B cell (primary cell): ENCODE measurements at regions of chr5 and their contacts with region 1.

Region 1: DNA sequence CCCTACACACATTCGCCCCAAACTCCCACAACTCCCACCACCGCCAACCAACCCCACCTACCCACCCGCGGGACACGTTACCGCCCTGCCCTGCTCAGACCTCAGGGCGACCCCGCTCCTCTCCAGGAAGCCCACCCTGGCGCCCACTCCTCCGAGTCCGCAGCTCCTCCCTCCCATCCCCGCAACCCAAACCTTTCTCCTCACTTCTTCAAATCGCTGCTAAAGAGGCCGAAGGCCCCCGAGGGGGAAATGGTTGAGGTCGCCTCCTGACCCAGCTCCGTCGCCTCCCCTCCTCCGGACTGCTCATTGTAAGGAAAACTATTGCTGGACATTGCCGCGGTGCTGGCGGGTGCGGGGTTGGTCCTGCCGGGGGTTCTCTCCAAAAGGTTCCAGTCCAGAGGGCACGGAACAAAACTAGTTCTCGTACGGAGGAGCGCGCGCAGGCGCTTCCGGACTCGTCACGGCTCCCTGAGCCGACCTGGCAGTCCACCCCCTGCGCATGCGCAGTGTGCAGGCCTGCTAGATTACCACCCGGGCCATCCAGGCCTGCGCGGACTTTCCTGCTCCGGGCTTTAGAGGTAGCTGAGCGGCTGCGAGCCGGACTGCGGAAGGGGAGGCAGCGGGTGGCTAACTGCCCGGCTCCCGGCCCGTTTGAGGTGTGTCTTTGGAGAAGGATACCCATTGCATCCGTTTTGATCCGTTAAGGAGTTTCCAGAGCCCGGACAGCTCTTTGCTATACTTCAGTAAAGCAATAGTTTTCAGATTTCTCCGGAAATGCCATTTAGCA is at the start of gene AP3B1:
- DNase-seq: peak; percentile 98
- ATAC-seq: peak; percentile 91
- H3K4me3 ChIP-seq: peak within 1 kb of the TSS; percentile 74 to 99 (median 87)
- H3K4me3 Mint-ChIP-seq: peak within 1 kb of the TSS; percentile 98
- H3K27ac ChIP-seq: peak within 1 kb of the TSS; percentile 75 to 90
- H3K27ac Mint-ChIP-seq: peak within 1 kb of the TSS; percentile 98
- H3K4me1 ChIP-seq: peaks cover 11 to 12% of the 10 kb centered on the region in 2 donors
- H3K4me1 Mint-ChIP-seq: peaks cover 36% of the 10 kb centered on the region
- H3K27me3 ChIP-seq: no peaks in the 10 kb centered on the region
- H3K27me3 Mint-ChIP-seq: no peaks in the 10 kb centered on the region
- CTCF ChIP-seq: no peak
- total RNA-seq, gene AP3B1: 58.9 and 63.5 TPM in 2 replicates

Region 2: GRCh38 chr5:78221964-78222451 is 72.4 kb before region 1 on chr5:
- CTCF ChIA-PET with region 1: interaction called, 5 read pairs
- POLR2A ChIA-PET with region 1: no interaction called
- intact Hi-C with region 1: loop called (anchors 1 kb)
- DNase-seq: peak; percentile 90
- ATAC-seq: peak; percentile 100
- H3K4me3 ChIP-seq: no peak overlapping the region
- H3K4me3 Mint-ChIP-seq: peak overlapping the region; percentile 4
- H3K27ac ChIP-seq: peak overlapping the region; percentile 29 to 33
- H3K27ac Mint-ChIP-seq: peak overlapping the region; percentile 85
- H3K4me1 ChIP-seq: peaks cover 8 to 10% of the 10 kb centered on the region in 2 donors
- H3K4me1 Mint-ChIP-seq: peaks cover 18% of the 10 kb centered on the region
- H3K27me3 ChIP-seq: no peaks in the 10 kb centered on the region
- H3K27me3 Mint-ChIP-seq: no peaks in the 10 kb centered on the region
- CTCF ChIP-seq: peak; percentile 67

Region 3: GRCh38 chr5:78727786-78728761 is 433.6 kb after region 1 on chr5:
- CTCF ChIA-PET with region 1: no interaction called
- POLR2A ChIA-PET with region 1: no interaction called
- intact Hi-C with region 1: loop called (anchors 1 kb)
- DNase-seq: peak; percentile 88
- ATAC-seq: peak; percentile 84
- H3K4me3 ChIP-seq: peak overlapping the region in 3 of 5 experiments; percentile 16 to 30 (median 25)
- H3K4me3 Mint-ChIP-seq: peak overlapping the region; percentile 79
- H3K27ac ChIP-seq: peak overlapping the region; percentile 85 to 89
- H3K27ac Mint-ChIP-seq: peak overlapping the region; percentile 99
- H3K4me1 ChIP-seq: peaks cover 60 to 68% of the 10 kb centered on the region in 2 donors
- H3K4me1 Mint-ChIP-seq: peaks cover 67% of the 10 kb centered on the region
- H3K27me3 ChIP-seq: no peaks in the 10 kb centered on the region
- H3K27me3 Mint-ChIP-seq: no peaks in the 10 kb centered on the region
- CTCF ChIP-seq: no peak

Region 4: GRCh38 chr5:79235634-79236363 is 941.4 kb after region 1 on chr5 and contains the start of gene JMY:
- CTCF ChIA-PET with region 1: no interaction called
- POLR2A ChIA-PET with region 1: no interaction called
- intact Hi-C with region 1: loop called (anchors 10 kb)
- DNase-seq: peak; percentile 92
- ATAC-seq: peak; percentile 77
- H3K4me3 ChIP-seq: peak within 1 kb of the TSS; percentile 69 to 84 (median 77)
- H3K4me3 Mint-ChIP-seq: peak within 1 kb of the TSS; percentile 96
- H3K27ac ChIP-seq: peak within 1 kb of the TSS; percentile 86 to 87
- H3K27ac Mint-ChIP-seq: peak within 1 kb of the TSS; percentile 89
- H3K4me1 ChIP-seq: peaks cover 19 to 33% of the 10 kb centered on the region in 2 donors
- H3K4me1 Mint-ChIP-seq: peaks cover 30% of the 10 kb centered on the region
- H3K27me3 ChIP-seq: no peaks in the 10 kb centered on the region
- H3K27me3 Mint-ChIP-seq: no peaks in the 10 kb centered on the region
- CTCF ChIP-seq: no peak
- total RNA-seq, gene JMY: 20.4 and 20.5 TPM in 2 replicates

Region 5: GRCh38 chr5:79514391-79515105 is 1220.1 kb after region 1 on chr5:
- CTCF ChIA-PET with region 1: no interaction called
- POLR2A ChIA-PET with region 1: no interaction called
- intact Hi-C with region 1: loop called (anchors 5 kb)
- DNase-seq: peak; percentile 98
- ATAC-seq: peak; percentile 79
- H3K4me3 ChIP-seq: peak overlapping the region; percentile 32 to 85 (median 76)
- H3K4me3 Mint-ChIP-seq: peak overlapping the region; percentile 100
- H3K27ac ChIP-seq: peak overlapping the region; percentile 89 to 94
- H3K27ac Mint-ChIP-seq: peak overlapping the region; percentile 100
- H3K4me1 ChIP-seq: peaks cover 26 to 29% of the 10 kb centered on the region in 2 donors
- H3K4me1 Mint-ChIP-seq: peaks cover 36% of the 10 kb centered on the region
- H3K27me3 ChIP-seq: peaks cover 5 to 31% (median 28%) of the 10 kb centered on the region in 4 experiments
- H3K27me3 Mint-ChIP-seq: peaks cover 29% of the 10 kb centered on the region
- CTCF ChIP-seq: no peak